ENCODE measurements at regions of chr4 and their contacts with region 1.

Region 1: GRCh38 chr4:121192480-121192879 is 28.4 kb upstream of the TNIP3 start:
- DNase-seq: peak; percentile 68
- H3K4me3 Mint-ChIP-seq: peak overlapping the region; percentile 69
- H3K27ac Mint-ChIP-seq: no peak overlapping the region
- H3K4me1 Mint-ChIP-seq: peaks cover 15% of the 10 kb centered on the region
- H3K27me3 Mint-ChIP-seq: no peaks in the 10 kb centered on the region
- CTCF ChIP-seq: peak; percentile 73

Region 2: GRCh38 chr4:121182296-121182695 is 10.2 kb before region 1 on chr4:
- CTCF ChIA-PET with region 1: interaction called, 18 read pairs
- POLR2A ChIA-PET with region 1: no interaction called
- intact Hi-C with region 1: no loop called
- DNase-seq: no peak
- H3K4me3 Mint-ChIP-seq: no peak overlapping the region
- H3K27ac Mint-ChIP-seq: no peak overlapping the region
- H3K4me1 Mint-ChIP-seq: no peaks in the 10 kb centered on the region
- H3K27me3 Mint-ChIP-seq: no peaks in the 10 kb centered on the region
- CTCF ChIP-seq: no peak

Region 3: GRCh38 chr4:121243485-121243884 is 51.0 kb after region 1 on chr4:
- CTCF ChIA-PET with region 1: interaction called, 113 read pairs
- POLR2A ChIA-PET with region 1: no interaction called
- intact Hi-C with region 1: no loop called
- DNase-seq: no peak
- H3K4me3 Mint-ChIP-seq: no peak overlapping the region
- H3K27ac Mint-ChIP-seq: no peak overlapping the region
- H3K4me1 Mint-ChIP-seq: no peaks in the 10 kb centered on the region
- H3K27me3 Mint-ChIP-seq: no peaks in the 10 kb centered on the region
- CTCF ChIP-seq: no peak

Region 4: DNA sequence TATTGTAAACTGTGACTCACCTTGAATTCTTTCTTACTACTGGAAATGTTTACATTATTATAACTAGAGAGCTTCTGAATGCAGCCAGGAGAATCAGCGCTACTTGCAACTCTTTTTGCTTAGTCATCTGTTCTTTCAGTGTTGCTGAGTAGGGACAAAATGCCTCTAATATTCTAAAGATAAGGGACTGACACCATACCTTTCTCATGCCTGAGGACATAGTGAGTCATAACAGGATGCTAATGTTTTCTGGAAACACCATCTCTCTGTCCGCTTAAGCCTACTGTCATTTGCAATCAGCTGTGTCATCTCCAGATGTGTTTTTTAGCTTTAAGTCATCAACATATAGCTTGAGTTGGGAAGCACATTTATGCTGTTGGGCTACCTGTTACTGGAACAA is 80.0 kb after region 1 on chr4:
- CTCF ChIA-PET with region 1: interaction called, 27 read pairs
- POLR2A ChIA-PET with region 1: interaction called, 3 read pairs
- intact Hi-C with region 1: no loop called
- DNase-seq: peak; percentile 84
- H3K4me3 Mint-ChIP-seq: no peak overlapping the region
- H3K27ac Mint-ChIP-seq: peak overlapping the region; percentile 14
- H3K4me1 Mint-ChIP-seq: peaks cover 17% of the 10 kb centered on the region
- H3K27me3 Mint-ChIP-seq: no peaks in the 10 kb centered on the region
- CTCF ChIP-seq: no peak

Region 5: GRCh38 chr4:121307445-121308327 is 115.2 kb after region 1 on chr4:
- CTCF ChIA-PET with region 1: interaction called, 138 read pairs
- POLR2A ChIA-PET with region 1: interaction called, 10 read pairs
- intact Hi-C with region 1: loop called (anchors 1 kb)
- DNase-seq: peak; percentile 87
- H3K4me3 Mint-ChIP-seq: no peak overlapping the region
- H3K27ac Mint-ChIP-seq: no peak overlapping the region
- H3K4me1 Mint-ChIP-seq: peaks cover 10% of the 10 kb centered on the region
- H3K27me3 Mint-ChIP-seq: no peaks in the 10 kb centered on the region
- CTCF ChIP-seq: peak; percentile 79

Region 6: GRCh38 chr4:121421594-121421993 is 229.1 kb after region 1 on chr4:
- CTCF ChIA-PET with region 1: interaction called, 12 read pairs
- POLR2A ChIA-PET with region 1: no interaction called
- intact Hi-C with region 1: loop called (anchors 1 kb)
- DNase-seq: peak; percentile 59
- H3K4me3 Mint-ChIP-seq: no peak overlapping the region
- H3K27ac Mint-ChIP-seq: peak overlapping the region; percentile 8
- H3K4me1 Mint-ChIP-seq: peaks cover 7% of the 10 kb centered on the region
- H3K27me3 Mint-ChIP-seq: no peaks in the 10 kb centered on the region
- CTCF ChIP-seq: peak; percentile 67

Region 7: DNA sequence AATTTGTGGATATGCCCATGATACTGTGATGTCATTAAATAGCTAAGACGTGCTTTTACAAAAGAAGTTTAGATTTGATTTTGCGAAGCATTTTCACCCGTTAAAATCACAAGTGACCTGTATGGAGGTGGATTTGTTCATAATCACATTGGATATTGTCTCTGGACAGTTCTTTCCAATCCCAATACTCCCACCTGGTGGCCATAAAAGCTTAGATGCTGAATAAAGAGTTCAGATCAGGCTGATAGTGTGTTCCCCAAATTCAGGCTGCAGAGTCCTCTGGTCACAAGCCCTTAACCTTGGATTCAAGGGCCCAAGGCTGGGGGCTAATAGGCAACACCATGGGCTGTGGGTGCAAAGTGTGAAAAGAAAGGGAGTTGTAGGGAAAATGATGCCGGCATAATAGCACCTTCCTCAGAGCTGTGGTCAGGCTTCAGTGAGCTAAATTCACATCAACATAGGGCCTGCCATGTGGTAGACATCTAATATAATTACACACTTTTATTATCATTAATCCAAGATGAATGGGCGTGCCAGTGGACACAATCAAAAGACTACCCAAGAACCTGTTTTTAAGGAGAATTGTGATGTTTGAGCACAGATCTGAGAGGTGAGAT is 544.4 kb after region 1 on chr4:
- CTCF ChIA-PET with region 1: interaction called, 7 read pairs
- POLR2A ChIA-PET with region 1: interaction called, 3 read pairs
- intact Hi-C with region 1: loop called (anchors 1 kb)
- DNase-seq: peak; percentile 79
- H3K4me3 Mint-ChIP-seq: no peak overlapping the region
- H3K27ac Mint-ChIP-seq: no peak overlapping the region
- H3K4me1 Mint-ChIP-seq: no peaks in the 10 kb centered on the region
- H3K27me3 Mint-ChIP-seq: no peaks in the 10 kb centered on the region
- CTCF ChIP-seq: peak; percentile 43

Region 8: DNA sequence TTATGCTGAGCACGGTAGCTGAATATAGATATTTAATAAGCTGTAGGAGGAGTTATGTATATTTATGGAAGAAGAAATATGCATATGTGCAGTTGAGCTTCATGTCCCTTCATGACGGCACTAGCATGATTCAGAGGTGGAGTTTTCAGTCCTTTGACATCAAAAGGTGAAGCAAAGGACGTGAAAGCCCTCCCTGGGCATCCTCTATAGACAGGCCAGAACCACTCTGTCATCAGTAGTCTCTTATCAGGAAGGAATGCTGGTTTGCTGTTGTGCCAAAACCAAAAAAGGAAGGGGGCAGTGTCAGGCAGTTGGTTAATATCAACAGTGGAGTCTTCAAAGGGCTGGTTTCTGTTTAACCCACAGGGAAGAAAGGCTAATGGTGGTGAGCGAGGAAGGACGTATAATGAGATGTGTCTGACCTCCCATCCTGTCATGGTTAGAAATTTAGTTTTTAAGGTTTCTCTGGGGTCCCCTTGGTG is 1287.5 kb after region 1 on chr4:
- CTCF ChIA-PET with region 1: no interaction called
- POLR2A ChIA-PET with region 1: no interaction called
- intact Hi-C with region 1: no loop called
- DNase-seq: no peak
- H3K4me3 Mint-ChIP-seq: no peak overlapping the region
- H3K27ac Mint-ChIP-seq: no peak overlapping the region
- H3K4me1 Mint-ChIP-seq: no peaks in the 10 kb centered on the region
- H3K27me3 Mint-ChIP-seq: no peaks in the 10 kb centered on the region
- CTCF ChIP-seq: no peak